ENCODE measurements at regions of chr5 and their contacts with region 1.

Region 1: DNA sequence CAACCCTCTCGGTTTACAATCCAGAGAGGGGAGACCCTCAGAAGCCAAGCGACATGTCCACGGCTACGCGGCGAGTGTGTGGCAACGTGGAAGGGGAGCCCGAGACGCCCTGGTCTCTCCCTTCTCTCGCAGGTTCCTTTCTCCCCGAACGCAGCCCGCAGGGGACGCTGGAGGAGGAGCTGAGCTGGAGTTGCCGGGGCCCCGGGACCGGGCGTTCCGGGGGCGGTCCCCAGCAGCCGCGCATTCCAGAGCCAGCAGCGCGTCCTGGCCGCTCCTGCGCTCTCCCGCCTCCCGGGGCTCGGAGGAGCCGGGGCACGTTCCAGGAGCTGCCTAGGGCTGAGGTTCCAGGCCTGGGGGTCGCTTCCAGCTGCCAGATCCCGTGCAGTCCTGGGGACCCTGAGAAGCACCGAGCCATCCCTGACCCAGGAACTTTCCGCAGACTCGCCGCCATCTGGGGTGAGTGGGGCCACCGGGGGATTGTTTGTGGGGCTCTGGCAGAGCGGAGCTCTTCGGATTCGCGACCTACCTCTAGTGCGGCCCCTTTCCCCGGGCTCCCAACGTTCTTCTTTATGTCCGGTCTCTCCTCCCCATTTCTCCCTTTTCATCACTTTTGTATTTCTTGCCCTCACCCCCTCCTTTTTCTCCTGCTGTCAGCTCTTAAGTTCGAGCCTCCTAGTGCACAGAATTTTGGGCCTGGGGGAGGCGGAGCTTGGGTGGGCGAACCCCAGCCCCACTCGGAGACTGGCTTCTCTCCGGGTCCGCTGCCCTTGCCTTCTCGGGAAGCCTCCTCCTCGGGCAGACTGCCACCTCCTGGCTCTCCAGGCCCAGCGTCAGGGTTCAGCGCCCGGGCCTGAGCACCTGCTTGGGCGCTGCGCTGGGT is at the start of gene SMIM3:
- DNase-seq: peak; percentile 71 to 87 (median 85)
- H3K4me3 ChIP-seq: peak within 1 kb of the TSS; percentile 84 to 94 (median 92)
- H3K27ac ChIP-seq: peak within 1 kb of the TSS; percentile 85 to 93
- H3K4me1 ChIP-seq: peaks cover 34 to 78% (median 70%) of the 10 kb centered on the region in 4 experiments
- H3K27me3 ChIP-seq: no peaks in the 10 kb centered on the region

Region 2: DNA sequence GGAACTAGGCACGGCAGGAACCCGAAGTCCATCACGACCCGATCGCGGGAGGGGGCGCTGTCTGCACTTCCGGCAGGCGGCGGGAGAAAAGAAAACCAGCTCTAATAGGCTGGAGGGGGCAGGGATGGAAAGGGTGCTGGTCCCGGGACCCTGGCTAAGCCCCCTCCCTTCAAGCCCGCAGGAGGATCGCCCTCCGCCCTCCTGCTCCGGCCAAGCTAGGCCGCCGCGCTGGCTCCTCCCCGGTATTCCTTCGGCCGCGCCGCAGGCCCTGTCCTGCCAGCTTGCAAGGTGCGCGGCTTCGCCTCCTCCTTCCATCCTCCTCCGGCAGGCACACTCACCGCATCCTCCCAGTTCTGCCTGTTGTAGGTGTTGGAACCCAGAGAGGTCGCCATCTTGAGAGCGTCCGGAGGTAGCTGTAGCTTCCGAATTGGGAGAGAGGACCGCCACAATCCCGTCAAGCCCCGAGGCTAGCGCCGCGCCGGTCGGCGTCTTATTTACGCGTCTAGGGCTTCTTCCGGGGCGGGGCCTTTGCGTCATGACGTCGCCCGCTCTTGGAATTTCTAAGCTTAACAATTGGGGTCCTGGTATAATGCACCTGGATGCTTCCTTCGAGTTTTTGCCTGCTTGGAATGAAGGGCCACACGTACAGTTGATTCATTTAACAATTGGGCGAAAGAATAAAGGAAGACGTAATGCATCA is 78.0 kb before region 1 on chr5 and contains the start of gene RBM22:
- CTCF ChIA-PET with region 1: interaction called, 30 read pairs
- POLR2A ChIA-PET with region 1: interaction called, 6 read pairs
- DNase-seq: peak; percentile 92 to 96 (median 95)
- H3K4me3 ChIP-seq: peak within 1 kb of the TSS; percentile 95 to 99 (median 98)
- H3K27ac ChIP-seq: peak within 1 kb of the TSS; percentile 93 to 97
- H3K4me1 ChIP-seq: peaks cover 10 to 19% (median 16%) of the 10 kb centered on the region in 4 experiments
- H3K27me3 ChIP-seq: no peaks in the 10 kb centered on the region

Region 3: GRCh38 chr5:150710165-150710564 is 68.6 kb before region 1 on chr5:
- CTCF ChIA-PET with region 1: interaction called, 15 read pairs
- POLR2A ChIA-PET with region 1: no interaction called
- DNase-seq: peak; percentile 35 to 55 (median 46)
- H3K4me3 ChIP-seq: no peak overlapping the region
- H3K27ac ChIP-seq: no peak overlapping the region
- H3K4me1 ChIP-seq: no peaks in the 10 kb centered on the region
- H3K27me3 ChIP-seq: no peaks in the 10 kb centered on the region

Region 4: GRCh38 chr5:150734579-150735384 is 44.0 kb before region 1 on chr5:
- CTCF ChIA-PET with region 1: interaction called, 22 read pairs
- POLR2A ChIA-PET with region 1: no interaction called
- DNase-seq: peak in 2 of 3 donors; percentile 66 to 68
- H3K4me3 ChIP-seq: peak overlapping the region in 1 of 7 experiments; percentile 31
- H3K27ac ChIP-seq: peak overlapping the region in 1 of 2 experiments; percentile 43
- H3K4me1 ChIP-seq: peaks cover 0 to 11% (median 0%) of the 10 kb centered on the region in 4 experiments
- H3K27me3 ChIP-seq: no peaks in the 10 kb centered on the region

Region 5: GRCh38 chr5:150758531-150759333 is 20.0 kb before region 1 on chr5 and contains the start of gene DCTN4:
- CTCF ChIA-PET with region 1: interaction called, 293 read pairs
- POLR2A ChIA-PET with region 1: interaction called, 25 read pairs
- DNase-seq: peak; percentile 98 to 99 (median 99)
- H3K4me3 ChIP-seq: peak within 1 kb of the TSS; percentile 74 to 98 (median 92)
- H3K27ac ChIP-seq: peak within 1 kb of the TSS; percentile 95 to 98
- H3K4me1 ChIP-seq: peaks cover 38 to 58% (median 47%) of the 10 kb centered on the region in 4 experiments
- H3K27me3 ChIP-seq: no peaks in the 10 kb centered on the region

Region 6: GRCh38 chr5:150789943-150790611 is 11.3 kb after region 1 on chr5:
- CTCF ChIA-PET with region 1: interaction called, 30 read pairs
- POLR2A ChIA-PET with region 1: interaction called, 11 read pairs
- DNase-seq: peak; percentile 89 to 98 (median 96)
- H3K4me3 ChIP-seq: peak overlapping the region in 5 of 7 experiments; percentile 11 to 64 (median 42)
- H3K27ac ChIP-seq: peak overlapping the region; percentile 69 to 79
- H3K4me1 ChIP-seq: peaks cover 47 to 68% (median 51%) of the 10 kb centered on the region in 4 experiments
- H3K27me3 ChIP-seq: no peaks in the 10 kb centered on the region

Measured in common myeloid progenitor, CD34-positive (primary cell).